ENCODE measurements at regions of chr1 and their contacts with region 1.

Region 1: GRCh38 chr1:47745725-47746597 is 251.2 kb downstream of the TRABD2B start:
- DNase-seq: no peak
- H3K4me3 ChIP-seq: no peak overlapping the region
- H3K27ac ChIP-seq: no peak overlapping the region
- H3K4me1 ChIP-seq: no peaks in the 10 kb centered on the region
- H3K27me3 ChIP-seq: peaks cover 21% of the 10 kb centered on the region
- CTCF ChIP-seq: no peak

Region 2: GRCh38 chr1:48061162-48062136 is 315.5 kb after region 1 on chr1:
- intact Hi-C with region 1: loop called (anchors 10 kb)
- DNase-seq: peak; percentile 32
- H3K4me3 ChIP-seq: no peak overlapping the region
- H3K27ac ChIP-seq: no peak overlapping the region
- H3K4me1 ChIP-seq: no peaks in the 10 kb centered on the region
- H3K27me3 ChIP-seq: peaks cover 78% of the 10 kb centered on the region
- CTCF ChIP-seq: peak; percentile 80

Measured in left ventricle myocardium inferior (tissue), 1 donor.